H1 (cell line): ENCODE measurements at regions of chr9 and their contacts with region 1.

Region 1: GRCh38 chr9:113737517-113738271 is 138.4 kb upstream of the ZNF618 start:
- DNase-seq: peak in 1 of 2 experiments; percentile 85
- H3K4me3 ChIP-seq: no peak overlapping the region
- H3K27ac ChIP-seq: no peak overlapping the region
- H3K4me1 ChIP-seq: peaks cover 0 to 11% (median 4%) of the 10 kb centered on the region in 4 experiments; a peak in 5 of 7 replicates
- H3K27me3 ChIP-seq: no peaks in the 10 kb centered on the region
- CTCF ChIP-seq: peak in 2 of 3 experiments; percentile 85 to 89; a peak in 3 of 4 replicates
- EP300 ChIP-seq: no peak
- POLR2A ChIP-seq: no peak
- RAD21 ChIP-seq: peak; percentile 93 to 96

Region 2: GRCh38 chr9:113720495-113720894 is 17.2 kb before region 1 on chr9:
- CTCF ChIA-PET with region 1: interaction called, 10 read pairs
- POLR2A ChIA-PET with region 1: interaction called, 3 read pairs
- DNase-seq: peak in 1 of 2 experiments; percentile 31
- H3K4me3 ChIP-seq: no peak overlapping the region
- H3K27ac ChIP-seq: no peak overlapping the region
- H3K4me1 ChIP-seq: peaks cover 0 to 5% (median 0%) of the 10 kb centered on the region in 4 experiments; a peak in 2 of 7 replicates
- H3K27me3 ChIP-seq: no peaks in the 10 kb centered on the region; a peak in 1 of 7 replicates
- CTCF ChIP-seq: no peak
- EP300 ChIP-seq: no peak
- POLR2A ChIP-seq: no peak
- RAD21 ChIP-seq: no peak

Region 3: GRCh38 chr9:113785334-113785733 is 47.6 kb after region 1 on chr9:
- CTCF ChIA-PET with region 1: interaction called, 10 read pairs
- POLR2A ChIA-PET with region 1: no interaction called
- DNase-seq: no peak
- H3K4me3 ChIP-seq: no peak overlapping the region
- H3K27ac ChIP-seq: no peak overlapping the region
- H3K4me1 ChIP-seq: peaks cover 0 to 6% (median 0%) of the 10 kb centered on the region in 4 experiments; a peak in 2 of 7 replicates
- H3K27me3 ChIP-seq: no peaks in the 10 kb centered on the region
- CTCF ChIP-seq: no peak
- EP300 ChIP-seq: no peak
- POLR2A ChIP-seq: no peak
- RAD21 ChIP-seq: no peak

Region 4: GRCh38 chr9:113798062-113799030 is 60.7 kb after region 1 on chr9:
- CTCF ChIA-PET with region 1: interaction called, 15 read pairs
- POLR2A ChIA-PET with region 1: no interaction called
- DNase-seq: peak in 1 of 2 experiments; percentile 39
- H3K4me3 ChIP-seq: no peak overlapping the region
- H3K27ac ChIP-seq: no peak overlapping the region
- H3K4me1 ChIP-seq: peaks cover 0 to 4% (median 0%) of the 10 kb centered on the region in 4 experiments; a peak in 2 of 7 replicates
- H3K27me3 ChIP-seq: no peaks in the 10 kb centered on the region
- CTCF ChIP-seq: no peak
- EP300 ChIP-seq: no peak
- POLR2A ChIP-seq: no peak
- RAD21 ChIP-seq: no peak

Region 5: GRCh38 chr9:113853324-113853723 is 115.6 kb after region 1 on chr9:
- CTCF ChIA-PET with region 1: interaction called, 10 read pairs
- POLR2A ChIA-PET with region 1: no interaction called
- DNase-seq: no peak
- H3K4me3 ChIP-seq: no peak overlapping the region
- H3K27ac ChIP-seq: no peak overlapping the region
- H3K4me1 ChIP-seq: peaks cover 0 to 5% (median 1%) of the 10 kb centered on the region in 4 experiments; a peak in 3 of 7 replicates
- H3K27me3 ChIP-seq: no peaks in the 10 kb centered on the region
- CTCF ChIP-seq: peak; percentile 43 to 89 (median 63)
- EP300 ChIP-seq: no peak
- POLR2A ChIP-seq: no peak
- RAD21 ChIP-seq: peak; percentile 70 to 77

Region 6: DNA sequence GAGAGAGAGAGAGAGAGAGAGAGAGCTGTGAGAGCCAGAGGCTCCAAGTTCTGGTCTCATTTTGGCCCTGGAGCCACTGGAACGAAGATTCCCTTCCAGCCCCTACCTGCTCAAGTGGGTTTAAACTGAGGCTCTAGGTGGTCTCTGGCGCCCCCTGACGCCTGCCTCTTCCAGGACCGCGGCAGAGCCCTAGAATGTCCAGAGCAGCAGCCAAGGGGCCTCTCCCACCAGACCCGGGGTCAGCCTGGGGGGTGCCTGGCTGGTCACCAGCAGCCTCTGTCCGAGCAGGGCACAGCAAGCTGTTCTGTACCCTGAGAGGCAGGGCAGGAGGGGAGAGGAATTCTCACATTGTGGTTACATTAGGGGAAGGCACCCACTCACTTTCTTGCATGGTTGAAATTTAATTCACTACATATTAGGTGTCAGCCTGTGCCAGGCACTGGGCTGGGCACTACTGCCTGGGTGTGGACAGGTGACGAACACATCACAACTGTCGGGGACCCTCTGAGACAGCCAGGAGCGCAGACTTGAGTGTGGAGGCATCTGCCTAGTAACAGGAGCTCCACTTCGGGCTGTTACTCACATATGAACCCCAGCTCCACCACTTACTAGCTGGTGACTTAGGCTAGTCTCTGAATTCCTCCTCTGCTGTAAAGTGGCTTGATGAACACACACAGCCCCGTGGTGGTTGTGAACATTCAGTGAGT is 295.9 kb after region 1 on chr9:
- CTCF ChIA-PET with region 1: interaction called, 16 read pairs
- POLR2A ChIA-PET with region 1: interaction called, 4 read pairs
- DNase-seq: peak in 1 of 2 experiments; percentile 82
- H3K4me3 ChIP-seq: no peak overlapping the region
- H3K27ac ChIP-seq: no peak overlapping the region
- H3K4me1 ChIP-seq: peaks cover 0 to 8% (median 6%) of the 10 kb centered on the region in 4 experiments; a peak in 4 of 7 replicates
- H3K27me3 ChIP-seq: no peaks in the 10 kb centered on the region
- CTCF ChIP-seq: peak; percentile 72 to 84 (median 84)
- EP300 ChIP-seq: no peak
- POLR2A ChIP-seq: no peak
- RAD21 ChIP-seq: peak; percentile 90 to 95